Activated naive CD4-positive, alpha-beta T cell treated with anti-CD3 and anti-CD28 coated beads for 36 hours (primary cell): ENCODE measurements at regions of chr3 and their contacts with region 1.

Region 1: GRCh38 chr3:101635954-101636798 is 40.8 kb downstream of the ZBTB11 start:
- DNase-seq: peak; percentile 92
- H3K4me3 Mint-ChIP-seq: no peak overlapping the region
- H3K27ac Mint-ChIP-seq: no peak overlapping the region
- H3K4me1 Mint-ChIP-seq: no peaks in the 10 kb centered on the region
- H3K27me3 Mint-ChIP-seq: no peaks in the 10 kb centered on the region

Region 2: DNA sequence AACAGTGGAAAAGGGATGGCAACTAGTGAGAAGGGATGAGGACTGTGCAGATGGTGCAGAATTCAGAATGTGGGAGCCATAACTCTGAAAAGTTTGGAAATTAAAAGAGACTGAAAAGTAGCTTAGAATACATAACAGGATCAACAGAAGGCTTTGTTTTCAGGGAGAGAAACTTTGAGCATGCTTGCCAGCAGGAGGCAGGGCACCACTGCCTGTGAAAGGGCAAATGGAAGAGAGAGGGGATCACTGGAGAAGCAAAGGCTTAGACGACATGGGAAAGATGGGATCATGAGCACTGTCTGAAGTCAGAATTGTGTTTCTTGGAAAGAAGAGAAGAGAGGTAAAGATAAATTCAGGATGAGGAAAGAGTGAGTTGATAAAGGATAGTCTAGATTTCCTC is 742.6 kb before region 1 on chr3:
- CTCF ChIA-PET with region 1: no interaction called
- intact Hi-C with region 1: loop called (anchors 5 kb)
- DNase-seq: no peak
- H3K4me3 Mint-ChIP-seq: no peak overlapping the region
- H3K27ac Mint-ChIP-seq: no peak overlapping the region
- H3K4me1 Mint-ChIP-seq: no peaks in the 10 kb centered on the region
- H3K27me3 Mint-ChIP-seq: peaks cover 21% of the 10 kb centered on the region

Region 3: DNA sequence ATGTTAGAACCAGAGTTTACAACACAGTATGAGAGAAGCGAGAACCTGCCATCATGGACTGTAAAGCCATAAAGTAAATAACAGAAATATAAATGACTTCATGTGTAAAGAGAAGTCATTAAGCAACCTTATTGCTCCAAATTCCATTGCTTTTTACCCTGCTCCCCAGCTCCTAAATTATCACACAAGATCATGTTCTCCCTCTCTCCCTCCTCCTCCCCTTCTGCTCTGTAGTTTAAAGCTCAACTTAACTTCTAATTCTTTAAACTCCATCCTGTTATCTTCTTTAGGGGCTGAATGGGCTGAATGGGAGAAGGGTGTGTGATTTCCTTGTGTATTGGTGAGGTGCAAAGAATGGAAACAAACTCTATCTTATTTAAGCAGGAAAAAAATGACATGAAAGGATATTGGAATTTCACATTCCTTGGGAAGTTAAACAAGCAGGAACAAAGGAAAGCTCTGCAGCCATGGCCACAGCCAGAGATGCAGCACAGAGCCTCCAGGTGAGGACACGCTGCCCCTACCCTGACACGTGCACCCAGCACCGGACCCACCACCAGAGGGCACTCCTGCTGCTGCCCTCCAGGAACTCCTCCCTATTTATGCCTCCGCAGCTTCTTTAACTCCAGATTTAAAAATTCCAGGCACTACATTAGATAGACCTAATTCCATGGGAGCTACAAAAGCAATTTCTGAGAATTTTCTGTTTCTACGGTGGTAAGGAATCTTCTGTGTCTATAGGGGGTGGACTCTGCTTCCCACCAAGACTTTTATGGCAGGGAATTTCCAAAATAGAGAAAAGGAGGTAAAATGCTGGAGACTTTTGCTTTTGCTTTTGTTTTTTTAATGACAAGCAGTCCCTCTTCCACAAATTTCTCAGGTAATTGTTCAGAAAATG is 566.0 kb before region 1 on chr3:
- CTCF ChIA-PET with region 1: no interaction called
- intact Hi-C with region 1: loop called (anchors 1 kb)
- DNase-seq: peak; percentile 84
- H3K4me3 Mint-ChIP-seq: no peak overlapping the region
- H3K27ac Mint-ChIP-seq: no peak overlapping the region
- H3K4me1 Mint-ChIP-seq: peaks cover 6% of the 10 kb centered on the region
- H3K27me3 Mint-ChIP-seq: peaks cover 17% of the 10 kb centered on the region

Region 4: DNA sequence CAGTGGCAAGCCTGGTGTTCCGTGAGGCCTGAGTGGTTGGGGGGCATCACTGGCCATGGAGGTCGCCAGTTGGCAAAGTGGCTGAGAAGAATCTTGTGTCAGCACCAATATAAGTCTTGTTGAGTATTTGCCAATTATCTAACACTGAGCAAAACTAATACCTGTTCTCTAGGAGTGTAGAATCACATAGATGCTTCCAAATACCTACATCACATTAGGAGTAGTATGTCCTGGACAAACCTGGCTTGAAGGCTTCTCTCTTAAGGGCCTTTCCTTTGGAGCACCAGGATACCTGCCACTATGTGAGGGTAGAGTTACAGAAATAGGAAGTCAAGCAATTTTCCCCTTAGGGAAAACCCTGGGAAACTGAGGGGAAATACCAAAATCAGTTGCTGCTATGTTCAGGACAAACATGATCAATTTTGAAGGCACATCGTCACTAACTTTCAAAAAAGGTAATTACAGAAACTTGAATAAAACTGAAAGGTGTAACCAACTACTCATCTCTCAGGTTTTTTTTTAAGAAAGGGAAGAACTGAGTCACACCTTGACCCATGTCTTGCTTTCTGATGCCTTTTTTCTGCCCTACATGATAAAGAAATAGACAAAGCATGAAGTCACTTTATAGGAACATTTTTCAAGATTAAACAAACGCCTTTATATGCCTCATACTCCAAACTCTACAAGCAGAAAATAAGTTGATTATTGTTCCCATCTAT is 416.2 kb before region 1 on chr3:
- CTCF ChIA-PET with region 1: no interaction called
- intact Hi-C with region 1: loop called (anchors 2 kb)
- DNase-seq: peak; percentile 8
- H3K4me3 Mint-ChIP-seq: no peak overlapping the region
- H3K27ac Mint-ChIP-seq: peak overlapping the region; percentile 61
- H3K4me1 Mint-ChIP-seq: peaks cover 16% of the 10 kb centered on the region
- H3K27me3 Mint-ChIP-seq: no peaks in the 10 kb centered on the region

Region 5: DNA sequence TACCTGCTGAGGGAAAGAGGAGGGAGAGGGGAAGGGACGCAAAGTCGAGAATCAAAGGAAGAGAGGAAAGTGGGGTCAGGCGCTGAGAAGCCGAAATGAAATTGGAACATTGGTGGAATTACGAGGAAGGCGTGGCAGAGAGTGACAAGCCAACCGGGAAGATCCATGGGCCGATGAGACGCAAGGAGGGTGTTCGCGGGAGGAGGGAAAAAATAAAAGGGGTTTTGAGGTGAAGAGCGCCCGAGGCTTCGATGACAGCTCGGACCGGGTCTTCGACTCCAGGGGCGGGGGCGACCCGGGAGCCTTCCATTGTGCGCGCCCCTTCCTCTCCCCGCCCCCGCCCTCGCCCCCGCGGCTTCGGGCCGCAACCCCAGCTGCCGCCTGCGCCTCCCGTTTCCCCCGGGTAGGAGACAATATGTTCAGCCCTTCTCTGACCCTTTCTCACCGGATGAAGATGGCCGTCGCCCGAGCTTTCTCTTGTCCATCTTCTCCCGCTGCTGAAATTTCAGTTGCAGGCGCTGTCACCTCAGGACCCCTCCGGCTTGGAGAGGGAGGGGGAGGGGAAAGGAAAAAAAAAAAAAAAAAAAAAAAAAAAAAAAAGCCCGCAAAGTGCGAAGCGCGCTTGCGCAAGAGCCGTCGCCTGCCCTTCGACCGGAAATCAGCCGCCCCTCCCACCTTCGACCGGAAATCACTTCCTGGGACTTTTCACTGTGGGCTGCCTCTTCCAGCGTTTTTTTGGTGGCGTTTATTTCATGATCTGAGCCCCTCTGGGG is 123.3 kb before region 1 on chr3 and contains the start of gene SENP7:
- CTCF ChIA-PET with region 1: no interaction called
- intact Hi-C with region 1: loop called (anchors 2 kb)
- DNase-seq: peak; percentile 89
- H3K4me3 Mint-ChIP-seq: peak within 1 kb of the TSS; percentile 97
- H3K27ac Mint-ChIP-seq: peak within 1 kb of the TSS; percentile 97
- H3K4me1 Mint-ChIP-seq: peaks cover 50% of the 10 kb centered on the region
- H3K27me3 Mint-ChIP-seq: no peaks in the 10 kb centered on the region
- total RNA-seq, gene SENP7: 16.1 to 16.8 TPM

Region 6: DNA sequence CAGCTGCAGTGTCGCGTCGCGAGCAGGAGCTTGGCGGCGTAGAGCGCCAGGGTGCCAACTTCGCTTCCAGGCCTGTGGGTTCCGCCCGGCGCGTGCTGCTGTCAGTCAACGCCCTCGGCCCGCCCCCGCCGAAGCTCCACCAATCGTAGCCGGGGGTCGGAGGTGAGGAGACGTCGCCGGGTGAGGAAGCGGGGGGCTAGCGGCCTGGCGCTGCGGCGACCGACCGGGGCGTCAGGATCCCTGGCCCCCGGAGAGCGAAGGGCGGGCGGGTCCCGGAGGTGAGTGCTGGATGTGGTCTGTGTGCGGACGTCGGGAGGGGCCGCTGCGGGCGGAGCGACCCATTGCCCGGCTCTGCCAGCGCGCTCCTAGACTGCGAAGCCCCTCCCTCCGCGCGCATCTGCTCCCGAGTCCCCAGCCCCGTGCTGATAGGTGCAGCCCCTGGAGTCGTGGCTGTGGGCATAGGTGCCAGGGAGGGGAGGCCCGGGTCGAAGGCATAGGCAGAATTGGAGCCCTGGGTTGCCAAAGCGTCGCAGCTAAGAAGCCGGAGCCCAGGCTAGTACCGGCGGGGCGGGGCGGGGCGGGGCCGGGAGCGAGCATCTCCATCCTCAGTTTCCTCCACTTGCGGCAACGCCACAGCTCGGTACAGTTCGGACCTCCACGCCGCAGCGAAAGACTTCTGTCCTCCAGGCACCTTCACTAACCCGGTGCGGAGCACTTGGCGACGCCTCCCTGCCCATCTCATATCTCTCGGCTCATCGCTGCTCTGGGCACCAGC is 143.1 kb after region 1 on chr3 and contains the start of gene NXPE3:
- CTCF ChIA-PET with region 1: no interaction called
- intact Hi-C with region 1: no loop called
- DNase-seq: peak; percentile 96
- H3K4me3 Mint-ChIP-seq: peak within 1 kb of the TSS; percentile 95
- H3K27ac Mint-ChIP-seq: peak within 1 kb of the TSS; percentile 96
- H3K4me1 Mint-ChIP-seq: peaks cover 49% of the 10 kb centered on the region
- H3K27me3 Mint-ChIP-seq: no peaks in the 10 kb centered on the region
- total RNA-seq, gene NXPE3: 18.9 to 19.3 TPM